Left ventricle myocardium superior (tissue), 1 donor: ENCODE measurements at regions of chr11 and their contacts with region 1.

Region 1: DNA sequence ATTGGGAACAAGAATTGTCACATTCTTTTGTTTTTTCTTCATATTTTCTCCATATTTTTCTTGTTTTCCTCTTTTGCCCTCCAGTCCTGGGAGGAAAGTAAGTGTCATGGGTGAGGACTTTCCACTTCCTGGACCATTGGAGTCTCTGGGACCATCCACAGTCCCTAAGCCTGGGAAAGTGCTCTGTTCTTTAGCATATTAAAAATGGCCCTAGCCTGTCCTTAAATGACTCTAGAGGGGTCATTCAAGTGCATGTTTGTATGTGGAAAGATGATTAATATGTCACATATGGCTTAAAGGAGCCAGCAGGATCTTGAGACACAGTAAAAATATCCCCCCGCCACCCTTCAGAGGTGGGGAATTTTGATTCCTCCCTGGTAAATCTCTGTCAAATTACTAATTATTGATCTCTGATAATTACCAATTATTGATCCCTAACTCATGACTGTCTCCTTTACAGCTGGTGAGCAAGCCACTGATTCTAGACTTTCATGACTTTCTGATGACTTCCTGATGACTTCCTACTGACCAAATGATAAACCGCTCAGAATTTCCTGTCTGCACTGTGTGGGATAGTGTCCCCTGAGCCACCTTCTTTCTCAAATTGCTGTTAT is 20.0 kb upstream of the SCGB1D1 start:
- DNase-seq: no peak
- ATAC-seq: peak; percentile 70

Region 2: GRCh38 chr11:62123669-62124185 is 46.3 kb before region 1 on chr11 and contains the start of gene INCENP:
- intact Hi-C with region 1: no loop called
- DNase-seq: peak; percentile 96
- ATAC-seq: peak; percentile 99
- total RNA-seq, gene INCENP: 11.6 TPM

Region 3: GRCh38 chr11:62309991-62310390 is 139.9 kb after region 1 on chr11:
- intact Hi-C with region 1: loop called (anchors 5 kb)
- DNase-seq: no peak
- ATAC-seq: no peak